PC-9 (cell line): ENCODE measurements at regions of chr12 and their contacts with region 1.

Region 1: GRCh38 chr12:71780237-71780822 is 25.7 kb downstream of the RAB21 start:
- DNase-seq: peak in 1 of 2 experiments; percentile 20
- H3K4me3 ChIP-seq: no peak overlapping the region
- H3K27ac ChIP-seq: no peak overlapping the region
- H3K4me1 ChIP-seq: no peaks in the 10 kb centered on the region
- H3K27me3 ChIP-seq: no peaks in the 10 kb centered on the region
- CTCF ChIP-seq: peak; percentile 81

Region 2: DNA sequence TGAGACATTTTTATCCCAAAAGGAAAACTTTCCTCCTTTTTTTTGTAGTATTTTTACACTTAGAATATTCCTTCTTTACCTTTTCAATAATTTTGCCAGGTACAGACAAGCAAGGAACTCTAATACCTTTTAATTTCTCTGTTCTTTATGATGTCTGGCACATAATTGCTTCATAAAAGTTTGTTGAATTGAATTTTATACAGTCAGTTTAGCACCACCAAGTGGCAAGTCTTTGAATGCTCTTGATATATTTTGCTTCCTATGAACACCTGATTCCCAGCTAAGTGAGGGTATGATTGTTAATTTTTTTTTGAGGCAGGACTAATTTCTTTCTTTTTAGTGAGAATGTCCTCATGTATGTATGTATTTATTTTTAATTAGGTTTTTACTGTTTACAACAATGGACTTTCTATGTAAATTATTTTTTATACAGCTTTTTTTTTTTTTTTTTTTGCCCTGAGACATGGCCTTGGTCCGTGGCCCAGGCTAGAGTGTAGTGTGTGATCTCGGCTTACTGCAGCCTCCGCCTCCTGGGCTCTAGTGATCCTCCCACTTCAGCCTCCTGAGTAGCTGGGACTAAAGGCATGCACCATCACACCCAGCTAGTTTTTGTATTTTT is 66.1 kb after region 1 on chr12:
- CTCF ChIA-PET with region 1: interaction called, 8 read pairs
- POLR2A ChIA-PET with region 1: no interaction called
- intact Hi-C with region 1: loop called (anchors 1 kb)
- DNase-seq: peak in 1 of 2 experiments; percentile 50
- H3K4me3 ChIP-seq: no peak overlapping the region
- H3K27ac ChIP-seq: no peak overlapping the region
- H3K4me1 ChIP-seq: peaks cover 10% of the 10 kb centered on the region
- H3K27me3 ChIP-seq: no peaks in the 10 kb centered on the region
- CTCF ChIP-seq: peak; percentile 69

Region 3: DNA sequence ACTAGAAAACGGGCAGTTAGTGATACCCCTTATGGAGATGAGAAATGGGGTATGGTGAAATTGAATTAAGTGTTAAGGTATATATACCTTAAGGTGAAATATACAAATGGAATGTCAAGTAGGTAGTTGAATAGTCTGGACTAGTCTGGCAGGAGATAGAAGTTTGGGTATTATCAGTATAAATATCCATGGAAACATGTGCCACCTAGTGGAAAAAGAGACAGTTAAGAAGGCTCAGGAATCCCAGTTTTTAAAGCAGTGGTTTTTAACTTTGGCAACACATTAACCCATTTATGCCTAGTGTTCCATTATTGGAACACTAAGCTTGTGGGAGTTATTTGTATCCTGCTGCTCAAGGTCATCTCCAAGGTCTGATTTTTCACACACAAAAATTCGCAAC is 119.8 kb after region 1 on chr12:
- CTCF ChIA-PET with region 1: no interaction called
- POLR2A ChIA-PET with region 1: no interaction called
- intact Hi-C with region 1: loop called (anchors 2 kb)
- DNase-seq: no peak
- H3K4me3 ChIP-seq: no peak overlapping the region
- H3K27ac ChIP-seq: no peak overlapping the region
- H3K4me1 ChIP-seq: no peaks in the 10 kb centered on the region
- H3K27me3 ChIP-seq: no peaks in the 10 kb centered on the region
- CTCF ChIP-seq: peak; percentile 39; the same call in 1 of the 2 replicates

Region 4: GRCh38 chr12:71999795-72000194 is 219.5 kb after region 1 on chr12:
- CTCF ChIA-PET with region 1: no interaction called
- POLR2A ChIA-PET with region 1: interaction called, 6 read pairs
- intact Hi-C with region 1: loop called (anchors 10 kb)
- DNase-seq: peak in 1 of 2 experiments; percentile 37
- H3K4me3 ChIP-seq: no peak overlapping the region
- H3K27ac ChIP-seq: no peak overlapping the region
- H3K4me1 ChIP-seq: no peaks in the 10 kb centered on the region
- H3K27me3 ChIP-seq: no peaks in the 10 kb centered on the region
- CTCF ChIP-seq: no peak